Gastrocnemius medialis (tissue), 4 donors: ENCODE measurements at regions of chr9 and their contacts with region 1.

Region 1: GRCh38 chr9:21656776-21657674 is 145.4 kb upstream of the MTAP start:
- DNase-seq: no peak
- ATAC-seq: no peak
- H3K4me3 ChIP-seq: no peak overlapping the region
- H3K27ac ChIP-seq: no peak overlapping the region
- H3K4me1 ChIP-seq: no peaks in the 10 kb centered on the region
- H3K27me3 ChIP-seq: no peaks in the 10 kb centered on the region
- CTCF ChIP-seq: no peak
- POLR2A ChIP-seq: no peak

Region 2: GRCh38 chr9:21559424-21560280 is 97.4 kb before region 1 on chr9:
- in situ Hi-C with region 1: loop called in 1 of 4 experiments (anchors 25 kb)
- intact Hi-C with region 1: no loop called
- DNase-seq: no peak
- ATAC-seq: no peak
- H3K4me3 ChIP-seq: peak overlapping the region; percentile 44 to 58 (median 50)
- H3K27ac ChIP-seq: no peak overlapping the region
- H3K4me1 ChIP-seq: peaks cover 0 to 8% of the 10 kb centered on the region in 2 donors
- H3K27me3 ChIP-seq: peaks cover 31 to 53% (median 40%) of the 10 kb centered on the region in 3 donors
- CTCF ChIP-seq: no peak
- POLR2A ChIP-seq: no peak

Region 3: DNA sequence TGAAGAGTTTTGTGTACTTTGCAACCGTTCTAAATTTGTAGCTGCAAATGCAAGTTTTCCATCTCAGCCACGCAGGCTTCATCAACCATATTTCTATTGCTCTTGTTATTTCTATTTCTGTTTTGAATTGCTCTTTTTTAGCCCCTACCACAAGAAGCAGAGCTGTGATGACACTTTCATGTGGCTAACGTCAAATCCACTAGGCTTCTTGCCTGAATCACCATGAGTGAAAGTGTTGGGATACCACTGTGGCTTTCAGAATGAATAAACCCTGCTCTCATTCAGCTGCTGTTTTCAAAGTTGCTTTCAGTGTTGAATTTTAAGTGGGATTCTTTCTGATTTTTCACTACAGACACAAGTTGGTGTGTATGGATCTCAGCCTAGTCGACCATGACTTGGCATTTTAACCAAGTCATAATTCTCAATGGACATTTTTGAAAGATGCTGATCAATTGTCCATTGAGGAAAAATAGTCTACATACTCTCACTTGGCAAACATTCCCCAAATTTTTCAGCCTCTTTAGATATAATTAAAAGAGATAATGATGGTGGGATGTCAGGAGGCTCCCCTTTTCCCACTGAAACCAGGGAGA is 104.4 kb after region 1 on chr9:
- in situ Hi-C with region 1: loop called in 1 of 4 experiments (anchors 25 kb)
- intact Hi-C with region 1: no loop called
- DNase-seq: no peak
- ATAC-seq: no peak
- H3K4me3 ChIP-seq: no peak overlapping the region
- H3K27ac ChIP-seq: no peak overlapping the region
- H3K4me1 ChIP-seq: no peaks in the 10 kb centered on the region
- H3K27me3 ChIP-seq: no peaks in the 10 kb centered on the region
- CTCF ChIP-seq: no peak
- POLR2A ChIP-seq: no peak